Activated T-helper 2 cell treated with anti-CD3 and anti-CD28 coated beads, Interferon-gamma antibody, Interleukin-2, Interleukin-4, amounts not matched to agents 10 μg/mL and 5 μg/mL and 100 μg/mL, durations not matched to agents 14 hours and 24 hours and 36 hours (primary cell): ENCODE measurements at regions of chr7 and their contacts with region 1.

Region 1: GRCh38 chr7:29408841-29409243 is 154.8 kb upstream of the PRR15 start:
- DNase-seq: peak; percentile 13
- H3K4me3 Mint-ChIP-seq: no peak overlapping the region
- H3K27ac Mint-ChIP-seq: no peak overlapping the region
- H3K4me1 Mint-ChIP-seq: no peaks in the 10 kb centered on the region
- H3K27me3 Mint-ChIP-seq: peaks cover 4% of the 10 kb centered on the region

Region 2: GRCh38 chr7:28921822-28922221 is 487.0 kb before region 1 on chr7:
- intact Hi-C with region 1: loop called (anchors 1 kb)
- DNase-seq: no peak
- H3K4me3 Mint-ChIP-seq: no peak overlapping the region
- H3K27ac Mint-ChIP-seq: no peak overlapping the region
- H3K4me1 Mint-ChIP-seq: peaks cover 3% of the 10 kb centered on the region
- H3K27me3 Mint-ChIP-seq: peaks cover 24% of the 10 kb centered on the region

Region 3: GRCh38 chr7:29113384-29114103 is 295.3 kb before region 1 on chr7:
- intact Hi-C with region 1: loop called (anchors 5 kb)
- DNase-seq: no peak
- H3K4me3 Mint-ChIP-seq: no peak overlapping the region
- H3K27ac Mint-ChIP-seq: no peak overlapping the region
- H3K4me1 Mint-ChIP-seq: peaks cover 9% of the 10 kb centered on the region
- H3K27me3 Mint-ChIP-seq: peaks cover 24% of the 10 kb centered on the region

Region 4: GRCh38 chr7:29189743-29190201 is 219.1 kb before region 1 on chr7:
- intact Hi-C with region 1: loop called (anchors 1 kb)
- DNase-seq: peak; percentile 24
- H3K4me3 Mint-ChIP-seq: no peak overlapping the region
- H3K27ac Mint-ChIP-seq: no peak overlapping the region
- H3K4me1 Mint-ChIP-seq: peaks cover 2% of the 10 kb centered on the region
- H3K27me3 Mint-ChIP-seq: peaks cover 47% of the 10 kb centered on the region

Region 5: GRCh38 chr7:29328811-29329210 is 80.0 kb before region 1 on chr7:
- intact Hi-C with region 1: no loop called
- DNase-seq: no peak
- H3K4me3 Mint-ChIP-seq: no peak overlapping the region
- H3K27ac Mint-ChIP-seq: no peak overlapping the region
- H3K4me1 Mint-ChIP-seq: peaks cover 3% of the 10 kb centered on the region
- H3K27me3 Mint-ChIP-seq: peaks cover 12% of the 10 kb centered on the region

Region 6: DNA sequence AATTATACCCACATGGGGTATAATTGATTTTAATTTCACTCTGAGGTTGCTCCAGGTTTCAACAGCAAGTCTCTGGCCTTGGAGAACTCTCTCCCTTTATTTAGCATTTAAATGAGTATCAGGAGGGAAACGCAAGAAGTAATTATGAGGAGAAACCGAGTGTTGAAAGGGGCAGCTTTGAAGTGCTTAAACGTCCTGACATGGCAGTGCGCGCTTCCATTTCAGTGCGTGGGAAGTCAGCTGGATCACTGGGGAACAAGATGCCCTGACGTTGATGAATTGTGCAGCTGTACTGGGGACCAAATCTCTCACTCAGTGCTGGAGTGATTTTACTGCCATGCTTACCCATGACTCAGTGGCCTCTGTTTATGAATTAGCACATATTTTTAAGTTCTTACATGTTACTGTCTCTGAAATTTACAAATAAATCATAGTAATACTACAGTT is 48.7 kb after region 1 on chr7:
- intact Hi-C with region 1: no loop called
- DNase-seq: no peak
- H3K4me3 Mint-ChIP-seq: no peak overlapping the region
- H3K27ac Mint-ChIP-seq: no peak overlapping the region
- H3K4me1 Mint-ChIP-seq: no peaks in the 10 kb centered on the region
- H3K27me3 Mint-ChIP-seq: no peaks in the 10 kb centered on the region